ENCODE measurements at regions of chr3 and their contacts with region 1.

Region 1: DNA sequence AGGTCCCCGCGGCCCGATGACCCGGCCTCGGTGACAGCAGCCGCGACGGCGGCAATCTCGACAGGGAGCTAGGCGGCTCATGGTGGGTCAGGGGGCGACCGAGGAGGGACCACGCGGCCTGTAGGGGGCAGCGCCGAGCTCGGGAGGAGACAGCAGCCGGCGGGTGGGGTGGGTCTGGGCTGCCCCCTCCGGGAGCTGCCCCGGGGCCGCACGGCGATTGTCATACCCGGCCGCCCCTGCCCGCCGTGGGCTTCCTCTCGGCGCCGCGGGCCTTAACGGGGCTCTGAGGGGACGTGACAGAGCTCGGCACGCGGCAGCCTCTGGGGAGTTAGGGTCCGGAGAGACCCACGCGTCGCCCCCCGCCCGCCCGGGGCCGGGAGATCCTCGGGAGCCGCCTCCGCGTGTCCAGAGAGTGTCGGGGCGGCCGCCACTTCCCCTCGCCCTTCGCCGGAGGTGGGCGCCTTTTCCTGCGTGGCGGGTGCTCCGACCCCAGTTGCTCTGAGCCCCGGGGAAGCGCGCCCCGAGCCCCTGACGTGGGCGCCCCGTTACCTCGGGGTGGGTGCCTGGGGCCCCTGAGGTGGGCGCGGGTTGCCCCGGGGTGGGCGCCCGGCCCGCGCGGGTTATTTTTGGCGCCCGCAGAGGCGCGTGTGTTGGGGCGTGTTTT is 539 bp upstream of the PLCL2 start:
- DNase-seq: peak; percentile 70
- H3K4me3 Mint-ChIP-seq: peak overlapping the region; percentile 90
- H3K27ac Mint-ChIP-seq: peak overlapping the region; percentile 96
- H3K4me1 Mint-ChIP-seq: peaks cover 27% of the 10 kb centered on the region
- H3K27me3 Mint-ChIP-seq: peaks cover 5% of the 10 kb centered on the region

Region 2: GRCh38 chr3:16467393-16467792 is 416.8 kb before region 1 on chr3:
- CTCF ChIA-PET with region 1: no interaction called
- POLR2A ChIA-PET with region 1: no interaction called
- DNase-seq: peak; percentile 35
- H3K4me3 Mint-ChIP-seq: peak overlapping the region; percentile 32
- H3K27ac Mint-ChIP-seq: peak overlapping the region; percentile 32
- H3K4me1 Mint-ChIP-seq: peaks cover 62% of the 10 kb centered on the region
- H3K27me3 Mint-ChIP-seq: no peaks in the 10 kb centered on the region

Region 3: DNA sequence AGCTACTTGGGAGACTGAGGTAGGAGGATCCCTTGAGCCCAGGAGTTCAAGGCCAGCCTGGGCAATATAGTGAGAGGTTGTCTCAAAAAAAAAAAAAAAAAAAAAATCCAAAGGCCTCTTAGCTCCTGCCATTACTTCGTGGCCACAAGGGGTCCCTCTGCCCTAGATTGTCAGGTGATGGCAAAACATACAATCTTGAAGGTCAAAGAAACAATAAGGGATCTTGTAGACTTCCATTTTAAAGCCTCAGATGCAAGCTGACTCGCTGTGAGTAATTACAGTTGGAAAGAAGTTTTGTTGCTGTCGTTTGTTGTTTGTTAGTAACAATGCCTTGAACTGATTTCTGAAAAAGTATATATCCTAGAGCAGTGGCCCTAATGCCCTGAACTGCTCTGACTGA is 55.4 kb before region 1 on chr3:
- CTCF ChIA-PET with region 1: interaction called, 19 read pairs
- POLR2A ChIA-PET with region 1: interaction called, 5 read pairs
- DNase-seq: peak; percentile 67
- H3K4me3 Mint-ChIP-seq: no peak overlapping the region
- H3K27ac Mint-ChIP-seq: no peak overlapping the region
- H3K4me1 Mint-ChIP-seq: peaks cover 18% of the 10 kb centered on the region
- H3K27me3 Mint-ChIP-seq: peaks cover 9% of the 10 kb centered on the region

Region 4: GRCh38 chr3:16842272-16843270 is 41.6 kb before region 1 on chr3:
- CTCF ChIA-PET with region 1: interaction called, 61 read pairs
- POLR2A ChIA-PET with region 1: interaction called, 172 read pairs
- DNase-seq: peak; percentile 85
- H3K4me3 Mint-ChIP-seq: peak overlapping the region; percentile 73
- H3K27ac Mint-ChIP-seq: peak overlapping the region; percentile 99
- H3K4me1 Mint-ChIP-seq: peaks cover 67% of the 10 kb centered on the region
- H3K27me3 Mint-ChIP-seq: no peaks in the 10 kb centered on the region

Region 5: GRCh38 chr3:16849229-16849628 is 35.0 kb before region 1 on chr3:
- CTCF ChIA-PET with region 1: interaction called, 61 read pairs
- POLR2A ChIA-PET with region 1: interaction called, 172 read pairs
- DNase-seq: peak; percentile 79
- H3K4me3 Mint-ChIP-seq: peak overlapping the region; percentile 50
- H3K27ac Mint-ChIP-seq: peak overlapping the region; percentile 64
- H3K4me1 Mint-ChIP-seq: peaks cover 35% of the 10 kb centered on the region
- H3K27me3 Mint-ChIP-seq: no peaks in the 10 kb centered on the region

Region 6: GRCh38 chr3:16866571-16866970 is 17.6 kb before region 1 on chr3:
- CTCF ChIA-PET with region 1: interaction called, 18 read pairs
- POLR2A ChIA-PET with region 1: interaction called, 16 read pairs
- DNase-seq: no peak
- H3K4me3 Mint-ChIP-seq: no peak overlapping the region
- H3K27ac Mint-ChIP-seq: no peak overlapping the region
- H3K4me1 Mint-ChIP-seq: peaks cover 10% of the 10 kb centered on the region
- H3K27me3 Mint-ChIP-seq: peaks cover 16% of the 10 kb centered on the region

Region 7: GRCh38 chr3:16871915-16872842 is 12.0 kb before region 1 on chr3:
- CTCF ChIA-PET with region 1: interaction called, 18 read pairs
- POLR2A ChIA-PET with region 1: interaction called, 16 read pairs
- DNase-seq: no peak
- H3K4me3 Mint-ChIP-seq: no peak overlapping the region
- H3K27ac Mint-ChIP-seq: no peak overlapping the region
- H3K4me1 Mint-ChIP-seq: no peaks in the 10 kb centered on the region
- H3K27me3 Mint-ChIP-seq: peaks cover 18% of the 10 kb centered on the region

Region 8: GRCh38 chr3:17151598-17152373 is 267.6 kb after region 1 on chr3:
- CTCF ChIA-PET with region 1: interaction called, 10 read pairs
- POLR2A ChIA-PET with region 1: interaction called, 37 read pairs
- DNase-seq: peak; percentile 95
- H3K4me3 Mint-ChIP-seq: peak overlapping the region; percentile 58
- H3K27ac Mint-ChIP-seq: peak overlapping the region; percentile 85
- H3K4me1 Mint-ChIP-seq: peaks cover 51% of the 10 kb centered on the region
- H3K27me3 Mint-ChIP-seq: no peaks in the 10 kb centered on the region